RWPE1 (cell line): ENCODE measurements at regions of chr5 and their contacts with region 1.

Region 1: GRCh38 chr5:56986626-56986947 is 34.7 kb upstream of the MIER3 start:
- DNase-seq: no peak
- H3K27ac ChIP-seq: no peak overlapping the region
- CTCF ChIP-seq: no peak

Region 2: GRCh38 chr5:56142620-56143372 is 843.8 kb before region 1 on chr5:
- CTCF ChIA-PET with region 1: interaction called, 11 read pairs
- POLR2A ChIA-PET with region 1: no interaction called
- DNase-seq: peak; percentile 18
- H3K27ac ChIP-seq: no peak overlapping the region
- CTCF ChIP-seq: no peak

Region 3: DNA sequence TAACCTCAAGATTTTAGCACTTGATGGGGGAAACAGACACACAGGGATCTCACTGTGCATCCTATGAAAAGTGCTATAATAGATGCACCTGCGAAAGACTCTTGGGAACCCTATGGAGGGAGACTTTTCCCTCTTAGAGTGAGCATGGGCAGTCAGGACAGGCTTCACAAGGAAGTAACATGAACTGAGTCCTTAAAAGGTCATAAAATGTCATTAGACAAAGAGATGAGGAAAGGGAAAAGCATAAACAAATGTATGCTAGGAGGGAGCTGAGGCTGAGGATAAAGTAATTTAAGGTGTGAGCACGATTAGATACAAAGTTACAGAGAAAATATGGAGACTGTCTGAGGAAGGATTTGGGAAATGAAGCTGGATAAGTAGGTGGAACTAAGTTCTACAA is 25.9 kb after region 1 on chr5:
- CTCF ChIA-PET with region 1: no interaction called
- POLR2A ChIA-PET with region 1: no interaction called
- DNase-seq: no peak
- H3K27ac ChIP-seq: no peak overlapping the region
- CTCF ChIP-seq: no peak